ENCODE measurements at regions of chr9 and their contacts with region 1.

Region 1: DNA sequence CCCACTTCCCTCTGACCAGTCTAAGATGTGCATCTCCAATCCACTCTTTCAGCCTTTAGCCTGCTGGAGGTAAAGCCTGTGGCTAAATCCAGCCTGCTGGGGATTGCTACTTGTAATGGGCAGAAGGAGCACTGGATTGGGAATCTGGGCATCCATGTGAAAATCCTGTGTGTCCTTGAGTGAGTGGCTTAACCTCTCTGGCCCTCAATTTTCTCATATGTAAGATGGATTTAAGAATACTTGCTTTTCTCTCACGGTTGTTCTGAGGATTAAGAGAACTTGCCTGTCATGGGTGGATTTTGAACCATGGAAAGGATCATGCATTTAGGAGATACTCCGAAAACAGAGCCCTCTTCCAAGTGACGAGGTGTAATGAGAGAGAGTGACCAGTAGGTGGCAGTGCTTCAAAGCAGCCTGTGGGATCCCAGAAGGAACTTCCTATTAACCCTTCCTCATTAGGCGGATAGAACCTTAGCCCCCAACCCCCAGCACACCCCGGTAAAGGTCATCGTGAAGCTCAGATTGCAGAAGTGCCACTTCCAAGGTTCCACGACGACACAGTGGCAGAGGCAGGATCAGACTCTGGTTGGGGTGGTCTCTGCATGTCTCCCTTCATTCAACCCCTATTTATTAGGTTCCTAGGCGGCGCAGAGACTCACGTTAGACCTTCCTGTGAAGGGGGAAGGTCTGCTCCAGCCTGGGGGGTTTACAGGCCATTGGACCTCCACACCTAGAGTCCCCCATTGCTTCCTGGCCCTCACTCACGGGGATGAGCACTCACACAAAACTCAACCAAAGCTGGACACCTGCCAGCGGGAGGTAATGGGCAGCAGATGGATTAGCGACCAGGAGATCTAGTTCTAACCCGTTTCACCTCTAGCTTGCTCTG is 68.7 kb upstream of the ZNF618 start:
- DNase-seq: peak in 1 of 2 donors; percentile 62
- ATAC-seq: peak; percentile 89
- H3K4me3 ChIP-seq: no peak overlapping the region
- H3K27ac ChIP-seq: peak overlapping the region in 1 of 2 donors; percentile 14
- H3K4me1 ChIP-seq: no peaks in the 10 kb centered on the region
- H3K27me3 ChIP-seq: no peaks in the 10 kb centered on the region

Region 2: DNA sequence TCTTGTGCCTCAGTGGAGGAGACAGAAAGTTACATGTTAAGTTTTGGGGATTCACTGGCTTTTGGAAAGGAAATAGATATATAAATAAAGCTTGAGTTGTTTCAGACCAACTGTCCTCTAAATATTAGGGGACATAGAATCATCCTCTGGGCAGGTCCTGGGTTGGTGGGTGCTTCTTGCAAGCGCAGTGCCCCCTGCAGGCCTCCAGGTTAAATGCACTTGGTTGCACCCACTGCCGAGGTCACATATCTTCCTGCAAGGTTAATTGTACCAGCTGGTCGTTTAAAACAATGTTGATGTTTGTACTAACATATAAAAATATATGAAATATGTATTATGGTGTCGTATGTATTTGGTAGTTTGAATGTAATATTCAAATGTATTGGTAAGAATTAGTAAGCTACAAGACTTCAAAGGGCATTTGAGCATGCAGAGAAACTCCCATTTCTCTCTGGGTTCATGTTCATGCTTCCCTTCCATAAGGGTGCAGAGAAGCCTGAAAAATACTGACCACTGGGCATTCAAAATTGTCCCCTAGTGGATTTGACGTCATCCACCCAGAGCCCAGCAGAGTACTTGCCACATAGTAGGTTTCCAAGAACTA is 155.7 kb after region 1 on chr9:
- intact Hi-C with region 1: loop called in 1 of 2 experiments (anchors 5 kb)
- DNase-seq: peak in 1 of 2 donors; percentile 68
- ATAC-seq: no peak
- H3K4me3 ChIP-seq: no peak overlapping the region
- H3K27ac ChIP-seq: no peak overlapping the region
- H3K4me1 ChIP-seq: no peaks in the 10 kb centered on the region
- H3K27me3 ChIP-seq: no peaks in the 10 kb centered on the region

Region 3: DNA sequence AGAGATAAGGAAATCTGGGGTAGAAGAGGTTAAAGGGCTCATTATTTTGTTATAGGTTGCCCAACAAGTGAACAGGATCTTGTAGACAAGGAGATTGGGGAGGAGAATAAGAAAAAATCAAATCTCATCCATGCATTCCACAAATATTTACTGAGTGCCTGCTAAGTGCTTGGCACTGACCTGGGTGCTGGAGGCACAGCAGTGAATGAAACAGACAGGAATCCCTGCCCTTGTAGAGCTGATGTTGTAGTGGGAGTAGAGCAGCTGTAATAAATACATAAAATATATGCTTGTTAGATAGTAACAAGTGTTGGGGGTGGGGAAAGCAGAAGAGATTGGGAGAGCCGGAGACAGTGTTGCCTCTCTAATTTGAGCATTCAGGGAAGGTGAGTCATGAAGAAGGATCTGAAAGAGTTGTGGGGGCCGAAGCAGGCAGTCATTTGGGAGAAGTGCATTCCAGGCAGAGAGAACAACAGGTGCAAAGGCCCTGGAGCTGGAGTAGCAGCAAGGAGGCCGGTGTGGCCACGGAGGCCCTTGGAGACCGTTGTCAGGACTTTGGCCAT is 166.5 kb after region 1 on chr9:
- intact Hi-C with region 1: no loop called
- DNase-seq: no peak
- ATAC-seq: no peak
- H3K4me3 ChIP-seq: no peak overlapping the region
- H3K27ac ChIP-seq: no peak overlapping the region
- H3K4me1 ChIP-seq: no peaks in the 10 kb centered on the region
- H3K27me3 ChIP-seq: no peaks in the 10 kb centered on the region

Region 4: DNA sequence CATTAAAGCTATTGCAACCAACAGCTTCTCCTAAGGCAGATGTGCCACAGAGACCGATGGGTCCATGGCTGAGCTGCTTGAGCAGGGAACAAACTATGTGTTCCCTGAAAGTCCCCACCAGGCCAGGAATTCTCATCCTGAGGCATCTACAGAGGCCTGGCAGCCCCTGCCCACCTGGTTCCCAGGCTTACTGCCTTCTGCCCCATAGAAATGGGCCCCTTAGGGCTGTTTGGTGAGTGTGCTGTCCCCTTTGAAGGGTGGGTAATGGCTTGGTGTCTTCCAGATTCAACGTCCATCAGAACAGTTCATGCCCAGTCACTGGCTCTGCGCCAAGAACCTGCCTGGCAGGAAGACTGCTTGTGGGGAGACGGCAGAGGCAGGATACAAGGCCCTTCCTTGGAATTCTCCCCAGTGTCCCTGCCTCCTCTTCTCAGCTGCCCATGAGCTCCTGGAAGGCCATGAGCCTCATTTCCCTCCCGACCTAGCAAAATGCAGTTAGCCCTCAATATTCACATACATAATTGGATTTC is 344.1 kb after region 1 on chr9:
- intact Hi-C with region 1: no loop called
- DNase-seq: no peak
- ATAC-seq: no peak
- H3K4me3 ChIP-seq: no peak overlapping the region
- H3K27ac ChIP-seq: no peak overlapping the region
- H3K4me1 ChIP-seq: no peaks in the 10 kb centered on the region
- H3K27me3 ChIP-seq: no peaks in the 10 kb centered on the region